ENCODE measurements at regions of chr3 and their contacts with region 1.

Region 1: DNA sequence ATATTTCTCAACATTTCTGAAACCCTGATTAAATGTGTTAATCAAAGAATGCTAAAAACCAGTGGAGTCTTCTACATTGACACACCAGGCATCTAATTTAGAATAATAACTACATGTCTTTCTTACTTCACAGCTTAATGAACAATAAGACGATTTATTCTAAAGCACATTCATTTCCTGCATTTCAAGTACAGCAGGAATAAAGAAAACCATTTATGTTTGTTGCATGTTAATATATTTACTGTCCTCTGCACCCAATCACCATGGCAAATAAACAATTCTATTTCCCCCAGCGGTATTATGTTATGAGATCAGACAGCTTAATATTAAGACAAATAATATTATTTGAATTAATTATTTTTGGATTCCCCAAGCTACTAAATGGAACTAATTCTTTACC is 1336.3 kb upstream of the CADM2 start:
- DNase-seq: no peak
- H3K4me3 ChIP-seq: no peak overlapping the region
- CTCF ChIP-seq: no peak

Region 2: GRCh38 chr3:83655083-83655482 is 32.6 kb after region 1 on chr3:
- in situ Hi-C with region 1: loop called (anchors 5 kb)
- DNase-seq: no peak
- H3K4me3 ChIP-seq: no peak overlapping the region
- CTCF ChIP-seq: no peak

Measured in astrocyte of the cerebellum (primary cell).